OCI-LY7 (cell line): ENCODE measurements at regions of chr16 and their contacts with region 1.

Region 1: GRCh38 chr16:75764154-75764768 is 38.0 kb upstream of the CPHXL start:
- DNase-seq: peak; percentile 88
- H3K4me3 ChIP-seq: peak overlapping the region; percentile 37
- H3K27ac ChIP-seq: peak overlapping the region; percentile 45
- H3K4me1 ChIP-seq: peaks cover 38% of the 10 kb centered on the region
- CTCF ChIP-seq: peak; percentile 96

Region 2: GRCh38 chr16:75234856-75235696 is 529.2 kb before region 1 on chr16:
- CTCF ChIA-PET with region 1: no interaction called
- POLR2A ChIA-PET with region 1: no interaction called
- intact Hi-C with region 1: loop called (anchors 5 kb)
- DNase-seq: no peak
- H3K4me3 ChIP-seq: no peak overlapping the region
- H3K27ac ChIP-seq: no peak overlapping the region
- H3K4me1 ChIP-seq: no peaks in the 10 kb centered on the region
- CTCF ChIP-seq: no peak

Region 3: DNA sequence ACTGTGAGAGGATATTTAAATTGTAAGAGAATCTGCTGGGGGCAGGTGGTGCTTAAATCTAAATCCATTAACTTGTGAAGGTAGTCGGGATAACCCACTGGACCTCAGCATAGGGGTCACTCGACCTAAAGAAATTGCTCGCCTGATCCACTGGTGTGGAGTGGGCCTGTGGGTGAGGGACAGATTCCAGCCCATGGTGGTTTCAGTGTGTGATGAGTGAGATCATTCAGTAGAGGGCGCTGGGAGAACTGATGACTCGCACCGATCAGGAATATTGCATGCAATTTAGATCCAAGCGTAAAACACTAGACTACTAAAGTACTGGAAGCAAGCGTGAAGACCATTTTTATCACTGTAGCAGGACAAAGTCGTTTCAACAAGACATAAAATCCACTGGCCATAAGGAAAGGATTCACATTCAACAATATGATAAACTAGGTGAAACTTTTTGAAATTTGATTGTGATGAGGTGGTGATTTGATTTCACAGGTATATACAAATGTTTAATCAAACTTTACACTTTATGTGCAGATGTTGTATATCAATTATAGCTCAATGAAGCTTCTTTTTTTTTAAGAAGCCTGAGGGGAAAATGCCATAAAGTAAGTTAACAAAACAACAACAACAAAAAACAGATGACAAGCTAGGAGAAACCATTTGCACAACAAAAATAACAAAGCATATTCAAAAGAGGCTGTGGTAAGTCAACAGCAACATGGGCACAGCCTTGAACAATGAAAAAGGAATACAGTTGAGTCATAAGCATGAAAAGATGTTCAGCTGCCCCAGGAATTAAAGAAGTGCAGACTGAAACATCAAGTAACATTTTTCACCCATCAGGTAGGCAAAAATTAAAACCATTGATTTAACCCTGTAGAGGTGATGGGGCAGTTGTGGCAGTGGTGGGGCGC is 292.3 kb before region 1 on chr16:
- CTCF ChIA-PET with region 1: no interaction called
- POLR2A ChIA-PET with region 1: no interaction called
- intact Hi-C with region 1: loop called (anchors 1 kb)
- DNase-seq: peak; percentile 58
- H3K4me3 ChIP-seq: no peak overlapping the region
- H3K27ac ChIP-seq: no peak overlapping the region
- H3K4me1 ChIP-seq: no peaks in the 10 kb centered on the region
- CTCF ChIP-seq: peak; percentile 88

Region 4: GRCh38 chr16:75555707-75556430 is 208.4 kb before region 1 on chr16 and contains the start of gene TMEM231:
- CTCF ChIA-PET with region 1: no interaction called
- POLR2A ChIA-PET with region 1: no interaction called
- intact Hi-C with region 1: loop called (anchors 2 kb)
- DNase-seq: peak; percentile 95
- H3K4me3 ChIP-seq: peak within 1 kb of the TSS; percentile 85
- H3K27ac ChIP-seq: peak within 1 kb of the TSS; percentile 78
- H3K4me1 ChIP-seq: peaks cover 14% of the 10 kb centered on the region
- CTCF ChIP-seq: 0 out of 2 replicates have a peak, but pooled peaks have one; percentile 20
- total RNA-seq, gene TMEM231: 5.6 and 6.9 TPM in 2 replicates

Region 5: GRCh38 chr16:75647492-75648264 is 116.6 kb before region 1 on chr16 and contains the starts of genes KARS1 and TERF2IP:
- CTCF ChIA-PET with region 1: interaction called, 3 read pairs
- POLR2A ChIA-PET with region 1: interaction called, 12 read pairs
- intact Hi-C with region 1: loop called (anchors 1 kb)
- DNase-seq: peak; percentile 93
- H3K4me3 ChIP-seq: peak within 1 kb of the TSS; percentile 88
- H3K27ac ChIP-seq: peak within 1 kb of the TSS; percentile 82
- H3K4me1 ChIP-seq: peaks cover 57% of the 10 kb centered on the region
- CTCF ChIP-seq: no peak
- total RNA-seq, gene KARS1: 126 and 143 TPM in 2 replicates
- total RNA-seq, gene TERF2IP: 41.6 and 42.3 TPM in 2 replicates